ENCODE measurements at regions of chr19 and their contacts with region 1.

Region 1: DNA sequence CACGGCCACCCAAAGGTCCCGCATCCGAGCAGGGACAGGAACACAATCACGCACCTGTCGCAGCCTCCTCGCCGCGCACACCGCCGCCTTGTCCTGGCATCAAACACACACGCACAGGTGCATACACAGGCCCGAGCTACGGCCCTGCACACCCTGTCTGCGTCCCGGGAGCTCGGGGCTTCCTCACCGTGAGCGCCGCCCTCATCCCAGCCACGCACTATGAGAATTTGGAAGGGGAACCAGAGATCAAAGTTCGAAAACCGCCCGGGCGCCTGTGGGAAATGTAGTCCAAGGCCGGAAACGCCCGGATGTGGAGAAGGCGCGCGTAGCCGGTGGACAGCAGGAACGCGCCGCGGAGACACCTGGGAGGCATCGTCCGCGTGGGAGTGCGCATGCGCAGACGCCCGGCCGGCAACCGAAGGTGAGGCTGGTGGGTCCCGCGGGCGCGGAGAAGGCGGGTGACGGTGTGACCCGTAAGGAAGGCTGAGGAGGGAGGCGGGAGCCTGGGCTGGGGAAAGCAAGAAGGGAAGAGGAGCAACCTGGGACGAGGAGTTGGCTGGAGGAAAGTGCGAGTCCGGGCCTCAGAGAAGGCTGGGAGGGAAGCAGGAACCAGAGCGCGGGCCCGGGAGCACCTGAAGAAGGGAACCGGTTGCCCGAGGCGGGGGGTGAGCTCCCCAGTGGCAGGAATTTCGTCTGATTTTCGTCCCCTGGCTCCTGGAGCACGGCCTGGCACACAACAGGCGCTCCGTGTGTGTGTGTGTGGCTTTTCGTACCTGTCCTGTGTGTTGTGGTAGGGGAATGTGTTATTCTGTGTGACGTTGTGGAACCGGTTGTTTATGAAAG is at the start of gene ZNF567:
- DNase-seq: peak; percentile 96
- H3K4me3 Mint-ChIP-seq: peak within 1 kb of the TSS; percentile 95
- H3K27ac Mint-ChIP-seq: peak within 1 kb of the TSS; percentile 83
- H3K4me1 Mint-ChIP-seq: peaks cover 17% of the 10 kb centered on the region
- H3K27me3 Mint-ChIP-seq: no peaks in the 10 kb centered on the region
- total RNA-seq, gene ZNF567: 7.6 and 7.7 TPM in 2 replicates

Region 2: GRCh38 chr19:36528194-36528920 is 159.1 kb before region 1 on chr19 and contains the start of gene ZNF260:
- intact Hi-C with region 1: loop called (anchors 1 kb)
- DNase-seq: peak; percentile 87
- H3K4me3 Mint-ChIP-seq: peak within 1 kb of the TSS; percentile 96
- H3K27ac Mint-ChIP-seq: peak within 1 kb of the TSS; percentile 94
- H3K4me1 Mint-ChIP-seq: peaks cover 17% of the 10 kb centered on the region
- H3K27me3 Mint-ChIP-seq: no peaks in the 10 kb centered on the region
- total RNA-seq, gene ZNF260: 6.2 and 7.1 TPM in 2 replicates

Region 3: GRCh38 chr19:36573020-36573885 is 114.2 kb before region 1 on chr19 and contains the start of gene ZNF529:
- intact Hi-C with region 1: loop called (anchors 5 kb)
- DNase-seq: peak; percentile 85
- H3K4me3 Mint-ChIP-seq: peak within 1 kb of the TSS; percentile 93
- H3K27ac Mint-ChIP-seq: peak within 1 kb of the TSS; percentile 95
- H3K4me1 Mint-ChIP-seq: peaks cover 24% of the 10 kb centered on the region
- H3K27me3 Mint-ChIP-seq: no peaks in the 10 kb centered on the region
- total RNA-seq, gene ZNF529: 14.8 and 15.2 TPM in 2 replicates

Region 4: DNA sequence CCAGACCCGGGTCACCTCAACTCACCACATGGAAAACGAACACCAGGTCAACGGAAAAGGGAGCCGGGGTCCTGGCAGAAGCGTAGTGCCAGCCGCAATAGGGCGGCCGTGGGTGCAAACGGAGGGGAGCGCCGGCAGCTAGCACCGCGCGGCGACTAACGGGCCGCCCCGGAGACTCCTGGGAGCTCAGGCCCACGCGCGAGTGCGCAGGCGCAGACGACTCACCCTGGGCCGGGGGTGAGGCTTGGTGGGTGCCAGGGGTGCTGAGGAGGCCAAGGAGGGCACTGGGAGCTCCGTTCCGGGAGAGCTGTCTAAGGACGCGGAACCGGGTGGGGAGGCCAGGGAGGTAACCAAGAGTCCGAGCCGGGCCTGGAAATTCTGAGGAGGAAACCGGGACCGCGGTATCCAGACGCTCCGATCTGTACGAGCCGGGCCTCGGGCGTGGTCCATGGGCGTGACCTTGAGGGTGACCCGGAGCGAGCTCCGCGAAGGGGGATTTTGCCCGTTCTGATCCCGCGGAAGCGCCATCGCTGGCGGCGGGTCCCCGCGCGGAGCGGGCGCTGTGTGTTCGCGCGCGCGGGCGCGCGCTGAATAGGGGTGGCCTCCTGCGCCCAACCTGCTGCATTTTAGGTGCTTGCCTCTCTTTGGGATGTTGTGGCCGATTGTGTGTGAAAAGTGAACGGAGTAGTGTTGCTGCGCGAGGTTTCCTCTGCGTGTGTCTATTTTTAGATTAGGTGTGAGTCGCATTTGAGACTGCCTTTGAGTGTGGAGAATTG is 82.1 kb before region 1 on chr19 and contains the start of gene ZNF382:
- intact Hi-C with region 1: loop called (anchors 1 kb)
- DNase-seq: peak; percentile 81
- H3K4me3 Mint-ChIP-seq: peak within 1 kb of the TSS; percentile 87
- H3K27ac Mint-ChIP-seq: peak within 1 kb of the TSS; percentile 89
- H3K4me1 Mint-ChIP-seq: peaks cover 17% of the 10 kb centered on the region
- H3K27me3 Mint-ChIP-seq: no peaks in the 10 kb centered on the region
- total RNA-seq, gene ZNF382: 8.8 and 10.8 TPM in 2 replicates

Region 5: GRCh38 chr19:36652958-36653357 is 34.5 kb before region 1 on chr19:
- intact Hi-C with region 1: no loop called
- DNase-seq: no peak
- H3K4me3 Mint-ChIP-seq: no peak overlapping the region
- H3K27ac Mint-ChIP-seq: no peak overlapping the region
- H3K4me1 Mint-ChIP-seq: no peaks in the 10 kb centered on the region
- H3K27me3 Mint-ChIP-seq: no peaks in the 10 kb centered on the region

Region 6: DNA sequence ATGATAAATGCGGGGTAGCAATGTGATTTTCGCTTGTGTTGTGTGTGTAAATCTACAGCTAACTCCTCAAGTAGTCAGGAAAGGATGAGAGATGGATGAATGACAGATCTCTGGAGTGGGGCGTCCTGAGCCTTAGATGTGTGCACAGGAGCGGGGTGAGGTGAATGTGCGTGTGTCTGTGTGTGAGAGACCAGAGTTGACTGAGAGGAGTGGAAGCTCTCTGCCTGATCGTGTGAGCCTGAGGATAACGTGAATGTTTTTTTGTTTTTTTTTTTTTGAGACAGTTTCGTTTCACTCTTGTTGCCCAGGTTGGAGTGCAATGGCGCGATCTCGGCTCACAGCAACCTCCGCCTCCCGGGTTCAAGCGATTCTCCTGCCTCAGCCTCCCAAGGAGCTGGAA is 21.6 kb before region 1 on chr19:
- intact Hi-C with region 1: loop called (anchors 1 kb)
- DNase-seq: no peak
- H3K4me3 Mint-ChIP-seq: peak overlapping the region; percentile 98
- H3K27ac Mint-ChIP-seq: peak overlapping the region; percentile 38
- H3K4me1 Mint-ChIP-seq: peaks cover 14% of the 10 kb centered on the region
- H3K27me3 Mint-ChIP-seq: no peaks in the 10 kb centered on the region

Region 7: GRCh38 chr19:36719687-36720556 is 32.5 kb after region 1 on chr19:
- intact Hi-C with region 1: no loop called
- DNase-seq: no peak
- H3K4me3 Mint-ChIP-seq: no peak overlapping the region
- H3K27ac Mint-ChIP-seq: no peak overlapping the region
- H3K4me1 Mint-ChIP-seq: no peaks in the 10 kb centered on the region
- H3K27me3 Mint-ChIP-seq: no peaks in the 10 kb centered on the region

Region 8: GRCh38 chr19:36772311-36773222 is 85.1 kb after region 1 on chr19 and contains the start of gene ZNF850:
- intact Hi-C with region 1: loop called (anchors 1 kb)
- DNase-seq: peak; percentile 91
- H3K4me3 Mint-ChIP-seq: peak within 1 kb of the TSS; percentile 95
- H3K27ac Mint-ChIP-seq: peak within 1 kb of the TSS; percentile 90
- H3K4me1 Mint-ChIP-seq: peaks cover 20% of the 10 kb centered on the region
- H3K27me3 Mint-ChIP-seq: no peaks in the 10 kb centered on the region
- total RNA-seq, gene ZNF850: 3.3 and 4.7 TPM in 2 replicates

Region 9: GRCh38 chr19:37077934-37078725 is 390.7 kb after region 1 on chr19 and contains the start of gene ZNF420:
- intact Hi-C with region 1: loop called (anchors 5 kb)
- DNase-seq: peak; percentile 85
- H3K4me3 Mint-ChIP-seq: peak within 1 kb of the TSS; percentile 97
- H3K27ac Mint-ChIP-seq: peak within 1 kb of the TSS; percentile 82
- H3K4me1 Mint-ChIP-seq: peaks cover 13% of the 10 kb centered on the region
- H3K27me3 Mint-ChIP-seq: no peaks in the 10 kb centered on the region
- total RNA-seq, gene ZNF420: 4.7 and 5.5 TPM in 2 replicates

Measured in activated T-helper 2 cell treated with anti-CD3 and anti-CD28 coated beads, Interferon-gamma antibody, Interleukin-2, Interleukin-4, amounts not matched to agents 10 μg/mL and 5 μg/mL and 100 μg/mL, durations not matched to agents 14 hours and 24 hours and 36 hours (primary cell).